Heart left ventricle (tissue), 16 donors: ENCODE measurements at regions of chr7 and their contacts with region 1.

Region 1: GRCh38 chr7:102106625-102107024 is 180.0 kb upstream of the SH2B2 start:
- DNase-seq: peak in 1 of 5 donors; percentile 5
- ATAC-seq: peak in 3 of 4 donors; percentile 20 to 53 (median 20)
- H3K4me3 ChIP-seq: no peak overlapping the region
- H3K27ac ChIP-seq: no peak overlapping the region
- H3K4me1 ChIP-seq: no peaks in the 10 kb centered on the region
- H3K27me3 ChIP-seq: no peaks in the 10 kb centered on the region
- CTCF ChIP-seq: no peak
- POLR2A ChIP-seq: no peak

Region 2: DNA sequence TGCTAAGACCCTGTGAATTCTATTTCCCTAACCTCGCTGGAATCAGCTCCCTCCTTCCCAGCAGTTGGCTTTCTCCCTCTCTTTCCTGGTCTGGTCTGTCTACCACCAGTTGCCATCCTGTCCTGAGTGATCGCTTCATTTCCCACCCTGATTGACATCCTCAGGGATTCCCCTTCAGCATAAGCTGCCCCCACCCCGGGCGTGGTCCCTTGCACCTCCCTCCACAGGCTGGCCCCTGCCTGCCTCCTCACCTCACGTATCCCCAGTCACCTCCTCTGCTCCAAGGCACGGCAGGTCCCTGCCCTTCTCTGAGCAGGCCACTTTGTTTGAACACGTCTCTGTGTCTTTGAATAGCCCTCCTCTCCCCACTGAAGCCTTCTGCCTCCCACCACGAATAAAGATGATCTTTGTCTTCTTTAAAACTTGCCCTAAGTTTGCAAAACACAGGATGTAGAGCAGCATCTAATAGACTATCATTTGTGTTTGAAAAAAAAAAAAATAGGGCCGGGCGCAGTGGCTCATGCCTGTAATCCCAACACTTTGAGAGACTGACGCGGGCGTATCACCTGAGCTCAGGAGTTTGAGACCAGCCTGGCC is 55.7 kb before region 1 on chr7:
- intact Hi-C with region 1: loop called in 1 of 10 experiments (anchors 10 kb)
- DNase-seq: no peak
- ATAC-seq: peak in 2 of 4 donors; percentile 21 to 29
- H3K4me3 ChIP-seq: no peak overlapping the region
- H3K27ac ChIP-seq: no peak overlapping the region
- H3K4me1 ChIP-seq: peaks cover 0 to 18% (median 3%) of the 10 kb centered on the region in 12 donors
- H3K27me3 ChIP-seq: no peaks in the 10 kb centered on the region
- CTCF ChIP-seq: no peak
- POLR2A ChIP-seq: no peak

Region 3: GRCh38 chr7:102140952-102141370 is 34.3 kb after region 1 on chr7:
- intact Hi-C with region 1: no loop called
- DNase-seq: no peak
- ATAC-seq: peak in 2 of 4 donors; percentile 46 to 63
- H3K4me3 ChIP-seq: no peak overlapping the region
- H3K27ac ChIP-seq: peak overlapping the region in 1 of 12 donors; percentile 62
- H3K4me1 ChIP-seq: peaks cover 0 to 14% (median 1%) of the 10 kb centered on the region in 12 donors
- H3K27me3 ChIP-seq: no peaks in the 10 kb centered on the region
- CTCF ChIP-seq: no peak
- POLR2A ChIP-seq: no peak

Region 4: DNA sequence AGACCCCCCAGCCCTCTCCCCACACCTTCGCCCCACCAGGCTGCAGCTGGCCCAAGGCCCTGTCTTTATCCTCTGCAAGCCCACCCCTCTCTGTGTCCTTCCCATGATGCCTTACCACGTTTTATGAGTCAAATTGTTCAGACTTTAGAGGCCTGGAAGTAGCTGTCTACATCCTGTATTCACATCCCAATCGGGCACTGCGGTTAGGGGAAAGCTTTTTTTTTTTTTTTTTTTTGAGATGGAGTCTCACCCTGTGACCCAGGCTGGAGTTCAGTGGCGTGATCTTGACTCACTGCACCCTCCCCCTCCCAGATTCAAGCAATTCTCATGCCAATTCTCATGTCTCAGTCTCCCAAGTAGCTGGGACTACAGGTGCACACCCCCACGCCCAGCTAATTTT is 58.5 kb after region 1 on chr7:
- intact Hi-C with region 1: no loop called
- DNase-seq: no peak
- ATAC-seq: no peak
- H3K4me3 ChIP-seq: no peak overlapping the region
- H3K27ac ChIP-seq: no peak overlapping the region
- H3K4me1 ChIP-seq: peaks cover 0 to 6% (median 0%) of the 10 kb centered on the region in 12 donors
- H3K27me3 ChIP-seq: no peaks in the 10 kb centered on the region
- CTCF ChIP-seq: no peak
- POLR2A ChIP-seq: no peak

Region 5: GRCh38 chr7:102208826-102209225 is 102.2 kb after region 1 on chr7:
- intact Hi-C with region 1: no loop called
- DNase-seq: no peak
- ATAC-seq: no peak
- H3K4me3 ChIP-seq: no peak overlapping the region
- H3K27ac ChIP-seq: no peak overlapping the region
- H3K4me1 ChIP-seq: peaks cover 0 to 5% (median 0%) of the 10 kb centered on the region in 12 donors
- H3K27me3 ChIP-seq: no peaks in the 10 kb centered on the region
- CTCF ChIP-seq: no peak
- POLR2A ChIP-seq: no peak